ENCODE measurements at regions of chr19 and their contacts with region 1.

Region 1: GRCh38 chr19:38634757-38635482 is 12.5 kb upstream of the ACTN4 start:
- DNase-seq: peak; percentile 46 to 77
- H3K4me3 ChIP-seq: no peak overlapping the region
- H3K27ac ChIP-seq: no peak overlapping the region
- H3K4me1 ChIP-seq: peaks cover 36% of the 10 kb centered on the region
- H3K27me3 ChIP-seq: no peaks in the 10 kb centered on the region
- CTCF ChIP-seq: peak; percentile 95

Region 2: DNA sequence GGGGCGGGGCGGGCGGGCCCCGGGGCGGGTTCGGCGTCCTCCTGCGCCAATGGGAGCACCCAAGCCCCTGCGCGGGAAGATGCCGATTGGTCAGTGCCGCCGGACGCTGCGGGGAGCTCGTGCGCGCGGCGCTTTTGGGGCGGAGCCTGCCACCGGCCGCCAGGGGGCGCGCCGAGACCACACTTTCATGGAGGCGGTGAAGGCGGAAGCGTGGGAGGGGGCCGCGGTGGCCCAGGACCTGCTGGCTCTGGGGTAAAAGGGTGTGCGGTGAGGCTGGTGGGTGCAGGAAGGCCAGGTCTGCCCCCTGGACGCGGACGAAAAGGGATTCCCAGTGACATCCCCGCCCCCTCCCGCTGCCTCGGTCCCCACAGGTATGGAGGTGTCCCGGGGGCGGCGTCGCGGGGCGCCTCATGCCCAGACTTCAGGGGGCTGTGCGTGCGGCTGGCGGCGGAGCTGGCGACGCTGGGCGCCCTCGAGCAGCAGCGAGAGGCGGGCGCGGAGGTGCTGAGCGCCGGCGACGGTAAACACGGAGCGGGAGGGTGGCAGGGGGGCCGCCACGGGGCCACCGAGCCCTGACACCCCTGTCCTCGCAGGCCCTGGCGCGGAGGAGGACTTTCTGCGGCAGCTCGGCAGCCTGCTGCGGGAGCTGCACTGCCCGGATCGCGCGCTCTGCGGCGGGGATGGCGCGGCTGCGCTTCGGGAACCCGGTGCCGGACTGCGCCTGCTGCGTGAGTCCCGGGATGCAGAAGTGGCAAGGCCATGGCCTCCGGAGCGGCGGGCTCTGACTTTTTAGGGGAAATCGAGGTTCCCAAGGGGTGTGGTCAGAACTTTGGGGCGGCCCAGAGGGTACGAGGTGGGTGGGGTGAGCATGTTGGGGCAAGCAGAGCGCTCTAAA is 231.7 kb before region 1 on chr19 and contains the start of gene FAM98C:
- CTCF ChIA-PET with region 1: interaction called, 13 read pairs
- POLR2A ChIA-PET with region 1: no interaction called
- intact Hi-C with region 1: loop called (anchors 1 kb)
- DNase-seq: peak; percentile 90 to 97
- H3K4me3 ChIP-seq: peak within 1 kb of the TSS; percentile 94
- H3K27ac ChIP-seq: no peak within 1 kb of the TSS
- H3K4me1 ChIP-seq: peaks cover 8% of the 10 kb centered on the region; the same call in 1 of the 2 replicates
- H3K27me3 ChIP-seq: no peaks in the 10 kb centered on the region
- CTCF ChIP-seq: peak; percentile 94
- total RNA-seq, gene FAM98C: 15.8 and 19.5 TPM in 2 replicates

Region 3: DNA sequence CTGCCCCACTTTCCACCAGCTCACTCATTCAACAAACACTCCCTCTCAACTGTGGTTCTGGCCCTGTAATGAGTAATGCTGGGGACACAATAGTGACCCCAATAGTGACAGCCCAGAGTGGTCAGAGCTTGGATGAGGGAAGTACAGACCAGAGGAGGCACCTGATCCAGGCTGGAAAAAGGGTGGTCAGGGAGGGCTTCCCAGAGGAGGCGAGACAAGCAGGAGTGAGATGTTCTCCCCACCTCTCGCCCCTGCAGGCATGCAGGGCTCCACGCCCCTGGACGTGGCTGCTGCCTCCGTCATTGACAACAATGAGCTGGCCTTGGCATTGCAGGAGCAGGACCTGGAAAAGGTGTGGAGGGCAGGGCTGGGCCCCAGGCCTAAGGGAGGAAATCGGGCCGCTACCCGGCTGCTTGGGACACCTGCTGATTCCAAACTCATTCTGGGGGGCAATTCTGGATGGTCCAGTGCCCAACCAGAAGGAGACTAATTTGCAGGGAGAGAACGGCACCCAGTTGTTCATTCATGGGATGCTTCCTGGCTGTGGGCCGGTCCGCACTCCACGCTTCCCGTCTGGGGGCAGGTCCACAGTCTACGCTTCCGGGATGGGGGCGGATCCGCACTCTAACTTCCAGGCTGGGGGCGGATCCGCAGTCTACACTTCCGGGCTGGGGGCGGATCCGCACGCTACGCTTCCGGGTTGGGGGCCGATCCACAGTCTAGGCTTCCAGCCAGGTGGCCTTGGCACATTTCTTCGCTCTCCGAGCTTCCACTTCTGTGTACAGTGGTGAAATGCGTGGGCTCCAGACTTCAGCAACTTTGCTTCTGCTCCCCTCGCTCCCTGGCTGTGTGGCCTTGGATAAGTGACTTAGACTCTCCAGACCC is 138.1 kb before region 1 on chr19:
- CTCF ChIA-PET with region 1: no interaction called
- POLR2A ChIA-PET with region 1: no interaction called
- intact Hi-C with region 1: no loop called
- DNase-seq: no peak
- H3K4me3 ChIP-seq: no peak overlapping the region
- H3K27ac ChIP-seq: no peak overlapping the region
- H3K4me1 ChIP-seq: no peaks in the 10 kb centered on the region
- H3K27me3 ChIP-seq: peaks cover 69% of the 10 kb centered on the region
- CTCF ChIP-seq: no peak

Region 4: DNA sequence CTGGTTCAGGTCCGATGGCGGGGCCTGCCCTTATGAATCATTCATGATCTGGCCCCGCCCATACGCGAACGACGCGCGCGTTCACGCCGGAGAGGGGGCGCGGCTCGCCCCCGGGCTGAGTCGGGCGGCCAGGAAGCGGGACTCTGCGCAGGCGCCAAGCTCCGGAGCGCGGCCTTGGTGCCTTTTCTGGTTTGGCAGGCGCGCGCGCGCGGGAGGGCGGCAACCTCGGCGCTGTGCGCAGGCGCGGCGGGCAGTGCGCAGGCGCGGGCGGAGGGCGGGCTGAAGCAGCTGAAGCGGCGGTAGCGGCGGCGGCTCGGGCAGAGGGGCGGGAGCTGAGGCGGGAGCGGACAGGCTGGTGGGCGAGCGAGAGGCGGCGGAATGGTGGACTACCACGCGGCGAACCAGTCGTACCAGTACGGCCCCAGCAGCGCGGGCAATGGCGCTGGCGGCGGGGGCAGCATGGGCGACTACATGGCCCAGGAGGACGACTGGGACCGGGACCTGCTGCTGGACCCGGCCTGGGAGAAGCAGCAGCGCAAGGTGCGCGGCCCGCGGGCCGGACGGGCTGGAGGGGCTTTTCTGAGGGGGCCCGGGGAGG is 12.5 kb after region 1 on chr19 and contains the start of gene ACTN4:
- CTCF ChIA-PET with region 1: interaction called, 3 read pairs
- POLR2A ChIA-PET with region 1: interaction called, 20 read pairs
- intact Hi-C with region 1: loop called (anchors 1 kb)
- DNase-seq: peak; percentile 86 to 100
- H3K4me3 ChIP-seq: peak within 1 kb of the TSS; percentile 100
- H3K27ac ChIP-seq: peak within 1 kb of the TSS; percentile 99
- H3K4me1 ChIP-seq: peaks cover 24% of the 10 kb centered on the region
- H3K27me3 ChIP-seq: no peaks in the 10 kb centered on the region
- CTCF ChIP-seq: no peak
- total RNA-seq, gene ACTN4: 1,066 and 1,233 TPM in 2 replicates

Region 5: DNA sequence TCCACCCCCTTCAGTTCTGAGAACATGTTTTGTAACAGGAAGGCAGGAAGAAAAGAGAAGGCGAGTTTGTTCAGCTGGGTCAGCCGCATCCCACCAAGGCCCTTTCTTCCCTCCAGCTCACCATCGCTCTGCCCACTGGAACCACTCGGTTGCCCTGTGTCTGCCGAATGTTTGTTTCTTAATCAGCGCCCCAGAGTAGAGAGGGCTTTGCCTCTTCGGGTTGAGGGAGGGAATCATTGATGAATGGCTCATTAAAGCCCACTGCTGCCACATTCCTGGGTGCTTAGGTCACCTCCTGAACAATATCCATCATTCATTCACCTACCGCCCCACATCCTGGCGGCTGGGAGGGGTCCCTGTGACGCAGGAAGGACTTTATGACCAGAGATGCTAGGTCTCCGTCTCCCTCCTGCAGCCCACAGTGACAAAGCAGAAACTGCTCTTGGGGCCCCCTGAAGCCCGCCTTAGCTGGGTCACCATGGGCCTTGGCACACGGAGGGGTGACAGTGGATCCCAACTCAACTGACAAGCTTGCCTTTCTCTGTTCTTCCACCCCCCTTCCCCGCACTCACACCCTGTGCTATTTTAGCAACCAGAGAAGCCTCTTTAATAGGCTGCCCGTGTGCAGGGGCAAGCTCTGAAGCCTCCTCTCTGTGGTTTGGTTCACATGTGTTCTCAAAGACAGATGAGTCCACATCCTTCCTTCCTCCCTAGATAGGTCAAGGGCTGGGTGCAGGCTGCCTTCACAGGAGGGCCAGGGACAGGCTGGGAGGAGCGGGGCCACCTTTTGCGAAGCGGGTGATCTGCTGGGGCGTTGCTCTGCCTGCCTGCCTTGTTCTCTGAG is 58.7 kb after region 1 on chr19:
- CTCF ChIA-PET with region 1: interaction called, 3 read pairs
- POLR2A ChIA-PET with region 1: interaction called, 10 read pairs
- intact Hi-C with region 1: loop called (anchors 1 kb)
- DNase-seq: peak; percentile 88 to 94
- H3K4me3 ChIP-seq: peak overlapping the region; percentile 49; the same call in 1 of the 2 replicates
- H3K27ac ChIP-seq: peak overlapping the region; percentile 100
- H3K4me1 ChIP-seq: peaks cover 65% of the 10 kb centered on the region
- H3K27me3 ChIP-seq: no peaks in the 10 kb centered on the region
- CTCF ChIP-seq: no peak

Region 6: GRCh38 chr19:38831142-38831605 is 196.3 kb after region 1 on chr19:
- CTCF ChIA-PET with region 1: no interaction called
- POLR2A ChIA-PET with region 1: interaction called, 4 read pairs
- intact Hi-C with region 1: loop called (anchors 1 kb)
- DNase-seq: peak; percentile 96 to 100
- H3K4me3 ChIP-seq: peak overlapping the region; percentile 60
- H3K27ac ChIP-seq: peak overlapping the region; percentile 98
- H3K4me1 ChIP-seq: peaks cover 67% of the 10 kb centered on the region
- H3K27me3 ChIP-seq: no peaks in the 10 kb centered on the region
- CTCF ChIP-seq: no peak

Region 7: DNA sequence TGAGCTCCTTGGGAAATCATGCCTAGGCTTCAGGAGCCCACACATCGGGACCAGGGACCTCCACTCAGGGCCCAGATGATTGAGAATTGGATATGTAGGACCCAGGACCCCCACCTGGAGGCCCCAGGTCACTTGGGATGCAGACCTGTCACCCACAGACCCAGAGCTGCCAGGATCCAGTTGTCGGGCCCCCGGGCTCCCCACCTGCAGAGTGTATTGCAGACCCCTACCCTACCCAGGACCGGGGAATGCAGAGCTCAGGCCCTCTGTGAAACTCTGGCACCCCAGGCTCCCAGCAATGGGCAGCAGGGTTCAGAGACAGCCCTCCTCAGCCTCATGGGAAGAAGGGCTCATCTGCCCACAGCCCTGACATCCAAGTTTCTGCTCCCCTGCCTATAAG is 270.7 kb after region 1 on chr19:
- CTCF ChIA-PET with region 1: interaction called, 12 read pairs
- POLR2A ChIA-PET with region 1: no interaction called
- intact Hi-C with region 1: no loop called
- DNase-seq: no peak
- H3K4me3 ChIP-seq: no peak overlapping the region
- H3K27ac ChIP-seq: no peak overlapping the region
- H3K4me1 ChIP-seq: peaks cover 7% of the 10 kb centered on the region
- H3K27me3 ChIP-seq: no peaks in the 10 kb centered on the region
- CTCF ChIP-seq: no peak